HepG2 (cell line): ENCODE measurements at regions of chr5 and their contacts with region 1.

Region 1: DNA sequence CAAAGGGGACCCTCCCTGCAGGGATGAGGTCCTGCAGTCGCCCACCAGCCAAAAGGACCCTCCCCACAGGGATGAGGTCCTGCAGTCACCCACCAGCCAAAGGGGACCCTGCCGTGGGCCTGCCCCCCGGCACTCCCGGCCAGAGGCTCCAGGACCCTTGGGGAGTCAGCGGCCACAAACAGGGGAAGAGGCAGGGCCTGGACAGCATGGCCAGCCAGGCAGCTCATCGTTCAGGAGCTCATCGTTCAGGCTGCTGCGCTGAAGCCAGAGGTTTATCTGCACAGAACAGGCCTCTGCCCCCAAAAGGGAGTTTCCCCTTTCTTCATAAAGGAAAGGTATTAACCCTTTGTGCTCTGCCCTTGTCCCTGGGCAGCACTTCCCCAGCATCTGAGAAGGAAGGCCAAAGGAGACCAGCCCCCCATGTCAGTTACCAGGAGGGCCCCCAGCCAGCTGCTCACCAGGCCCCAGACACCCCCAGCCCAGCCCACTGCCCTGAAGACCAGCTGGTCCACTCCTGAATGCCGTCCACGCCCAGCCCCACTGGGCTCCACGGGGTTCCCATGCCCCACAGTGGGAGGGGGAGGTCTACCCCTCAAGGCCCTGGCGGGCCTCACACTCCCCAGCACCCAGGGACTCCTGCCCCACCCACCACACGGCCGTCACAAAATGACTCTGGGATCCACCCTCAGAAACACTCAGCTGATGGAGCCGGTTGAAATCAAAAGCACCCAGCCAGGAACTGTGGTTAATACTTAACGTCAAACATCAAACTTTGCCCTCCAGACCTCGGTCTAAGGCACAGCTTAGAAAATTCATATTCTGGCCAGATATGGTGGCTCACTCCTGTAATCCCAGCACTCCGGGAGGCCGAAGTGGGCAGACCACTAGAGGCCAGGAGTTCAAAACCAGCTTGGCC is 6.3 kb downstream of the SLC12A7 start:
- DNase-seq: peak; percentile 93
- ATAC-seq: peak; percentile 70
- H3K4me3 ChIP-seq: peak overlapping the region; percentile 55 to 82 (median 60)
- H3K27ac ChIP-seq: peak overlapping the region; percentile 98
- H3K4me1 ChIP-seq: peaks cover 90% of the 10 kb centered on the region
- H3K27me3 ChIP-seq: no peaks in the 10 kb centered on the region; a peak in 1 of 5 replicates
- CTCF ChIP-seq: peak; percentile 13; the same call in 1 of the 2 replicates
- EP300 ChIP-seq: peak in 1 of 2 experiments; percentile 70; a peak in 2 of 4 replicates
- POLR2A ChIP-seq: peak in 1 of 2 experiments; percentile 46; a peak in 2 of 4 replicates
- RAD21 ChIP-seq: no peak

Region 2: GRCh38 chr5:431001-431710 is 674.5 kb before region 1 on chr5:
- CTCF ChIA-PET with region 1: no interaction called
- POLR2A ChIA-PET with region 1: no interaction called
- in situ Hi-C with region 1: no loop called
- intact Hi-C with region 1: no loop called
- DNase-seq: peak; percentile 41
- ATAC-seq: peak; percentile 98
- H3K4me3 ChIP-seq: no peak overlapping the region
- H3K27ac ChIP-seq: no peak overlapping the region
- H3K4me1 ChIP-seq: peaks cover 10% of the 10 kb centered on the region
- H3K27me3 ChIP-seq: no peaks in the 10 kb centered on the region
- CTCF ChIP-seq: peak; percentile 94
- EP300 ChIP-seq: no peak
- POLR2A ChIP-seq: no peak
- RAD21 ChIP-seq: peak; percentile 88

Region 3: DNA sequence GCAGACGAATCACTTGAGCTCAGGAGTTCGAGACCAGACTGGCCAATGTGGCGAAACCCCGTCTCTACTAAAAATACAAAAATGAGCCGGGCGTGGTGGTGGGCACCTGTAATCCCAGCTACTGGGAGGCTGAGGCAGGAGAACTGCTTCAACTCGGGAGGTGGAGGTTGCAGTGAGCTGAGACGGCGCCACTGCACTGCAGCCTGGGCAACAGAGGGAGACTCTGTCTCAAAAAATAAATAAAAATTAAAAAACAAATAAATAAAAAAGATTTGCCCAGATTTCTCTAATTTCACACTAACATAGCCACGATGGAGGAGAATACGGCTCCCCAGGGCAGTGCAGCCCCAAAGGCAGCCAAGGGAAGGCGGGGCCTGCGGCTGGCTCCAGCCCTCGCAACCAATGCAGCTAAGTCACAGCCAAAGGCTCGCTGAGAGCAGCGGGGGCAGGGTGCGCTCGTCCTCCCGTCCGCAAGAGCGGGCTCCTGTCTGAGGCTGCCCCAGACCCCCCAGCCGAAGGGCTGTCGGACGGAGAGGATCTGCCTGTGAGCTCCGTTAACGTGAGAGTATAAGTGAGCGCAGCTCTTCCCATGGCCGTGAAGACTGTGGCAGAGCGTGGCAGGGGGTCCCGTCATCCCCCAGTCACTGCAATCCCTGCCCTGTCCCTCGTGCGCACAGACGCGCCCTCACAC is 37.3 kb before region 1 on chr5:
- CTCF ChIA-PET with region 1: no interaction called
- POLR2A ChIA-PET with region 1: no interaction called
- in situ Hi-C with region 1: loop called (anchors 5 kb)
- intact Hi-C with region 1: no loop called
- DNase-seq: no peak
- ATAC-seq: no peak
- H3K4me3 ChIP-seq: no peak overlapping the region
- H3K27ac ChIP-seq: no peak overlapping the region
- H3K4me1 ChIP-seq: no peaks in the 10 kb centered on the region
- H3K27me3 ChIP-seq: no peaks in the 10 kb centered on the region
- CTCF ChIP-seq: no peak
- EP300 ChIP-seq: no peak
- POLR2A ChIP-seq: no peak
- RAD21 ChIP-seq: no peak

Region 4: GRCh38 chr5:1118231-1118698 is 12.7 kb after region 1 on chr5:
- CTCF ChIA-PET with region 1: no interaction called
- POLR2A ChIA-PET with region 1: interaction called, 91 read pairs
- in situ Hi-C with region 1: no loop called
- intact Hi-C with region 1: no loop called
- DNase-seq: no peak
- ATAC-seq: no peak
- H3K4me3 ChIP-seq: peak overlapping the region in 1 of 3 experiments; percentile 62; a peak in 1 of 6 replicates
- H3K27ac ChIP-seq: no peak overlapping the region
- H3K4me1 ChIP-seq: peaks cover 54% of the 10 kb centered on the region
- H3K27me3 ChIP-seq: peaks cover 28 to 97% of the 10 kb centered on the region in 2 experiments
- CTCF ChIP-seq: no peak
- EP300 ChIP-seq: no peak
- POLR2A ChIP-seq: no peak
- RAD21 ChIP-seq: no peak

Region 5: DNA sequence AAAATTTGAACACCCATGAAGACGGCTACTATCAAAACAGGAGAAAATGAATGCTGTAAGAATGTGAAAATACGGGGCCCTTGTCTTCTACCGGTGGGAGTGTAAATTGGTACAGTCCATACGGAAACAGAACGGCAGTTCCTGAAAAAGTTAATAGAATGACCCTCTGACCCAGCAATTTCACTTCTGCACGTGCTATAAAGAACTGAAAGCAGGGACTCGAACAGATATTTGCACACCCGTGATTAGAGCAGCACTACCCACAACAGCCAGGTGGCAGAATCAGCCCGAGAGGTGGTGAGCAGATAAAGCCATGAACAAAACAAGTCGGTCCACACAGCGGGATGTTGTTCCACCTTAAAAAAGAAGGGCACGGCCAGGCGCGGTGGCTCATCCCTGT is 28.9 kb after region 1 on chr5:
- CTCF ChIA-PET with region 1: interaction called, 6 read pairs
- POLR2A ChIA-PET with region 1: interaction called, 200 read pairs
- in situ Hi-C with region 1: no loop called
- intact Hi-C with region 1: no loop called
- DNase-seq: peak; percentile 30
- ATAC-seq: no peak
- H3K4me3 ChIP-seq: no peak overlapping the region
- H3K27ac ChIP-seq: no peak overlapping the region
- H3K4me1 ChIP-seq: peaks cover 78% of the 10 kb centered on the region
- H3K27me3 ChIP-seq: peaks cover 1 to 47% of the 10 kb centered on the region in 2 experiments; a peak in 3 of 5 replicates
- CTCF ChIP-seq: peak; percentile 47
- EP300 ChIP-seq: no peak
- POLR2A ChIP-seq: no peak
- RAD21 ChIP-seq: no peak

Region 6: GRCh38 chr5:1161833-1162229 is 56.2 kb after region 1 on chr5:
- CTCF ChIA-PET with region 1: no interaction called
- POLR2A ChIA-PET with region 1: interaction called, 53 read pairs
- in situ Hi-C with region 1: no loop called
- intact Hi-C with region 1: loop called (anchors 2 kb)
- DNase-seq: no peak
- ATAC-seq: peak; percentile 34
- H3K4me3 ChIP-seq: peak overlapping the region; percentile 16 to 59 (median 18); a peak in 5 of 6 replicates
- H3K27ac ChIP-seq: peak overlapping the region; percentile 28
- H3K4me1 ChIP-seq: peaks cover 72% of the 10 kb centered on the region
- H3K27me3 ChIP-seq: peaks cover 9 to 53% of the 10 kb centered on the region in 2 experiments; a peak in 4 of 5 replicates
- CTCF ChIP-seq: no peak
- EP300 ChIP-seq: no peak
- POLR2A ChIP-seq: no peak
- RAD21 ChIP-seq: no peak

Region 7: DNA sequence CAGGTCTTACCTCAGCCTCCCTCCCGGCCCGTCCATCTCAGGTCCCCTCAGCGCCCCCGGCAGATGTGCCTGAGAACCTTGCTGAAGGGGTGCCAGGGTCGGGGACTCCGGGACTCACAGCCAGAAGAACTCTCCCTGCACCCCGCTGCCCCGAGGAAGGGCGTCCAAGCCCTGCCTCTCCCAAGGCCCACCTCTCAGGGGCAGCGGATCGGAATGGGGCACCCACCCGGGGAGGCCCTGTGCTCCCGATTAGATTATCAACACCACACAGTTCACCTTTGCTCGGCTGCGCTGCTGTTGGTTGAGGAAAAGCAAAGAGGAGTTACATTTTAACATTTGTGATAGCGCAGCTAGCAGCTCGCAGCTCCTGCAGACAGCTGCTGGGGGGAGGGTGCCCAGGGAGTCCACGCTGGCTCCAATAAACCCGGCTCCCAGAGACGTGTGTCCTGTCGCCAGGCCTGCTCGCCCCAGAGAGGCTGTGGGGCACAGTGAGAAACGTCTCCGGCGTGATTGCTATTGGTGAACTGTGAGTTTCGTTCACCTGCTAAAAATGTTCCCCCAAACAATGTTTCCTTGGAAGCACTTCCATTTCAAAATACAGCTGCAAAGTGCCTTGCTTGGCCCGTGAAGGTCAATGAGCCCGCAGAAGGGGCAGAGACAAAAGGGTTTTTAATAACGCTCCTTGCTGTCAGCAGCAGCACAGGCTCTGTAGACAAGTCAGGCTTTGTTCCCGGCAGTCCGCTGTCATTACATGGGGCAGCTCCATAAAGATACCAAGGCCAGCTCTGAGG is 77.2 kb after region 1 on chr5:
- CTCF ChIA-PET with region 1: no interaction called
- POLR2A ChIA-PET with region 1: interaction called, 19 read pairs
- in situ Hi-C with region 1: no loop called
- intact Hi-C with region 1: no loop called
- DNase-seq: peak; percentile 89
- ATAC-seq: peak; percentile 69
- H3K4me3 ChIP-seq: peak overlapping the region; percentile 68 to 79 (median 74); a peak in 5 of 6 replicates
- H3K27ac ChIP-seq: peak overlapping the region; percentile 99
- H3K4me1 ChIP-seq: peaks cover 94% of the 10 kb centered on the region
- H3K27me3 ChIP-seq: no peaks in the 10 kb centered on the region; a peak in 1 of 5 replicates
- CTCF ChIP-seq: no peak
- EP300 ChIP-seq: peak in 1 of 2 experiments; percentile 54; a peak in 2 of 4 replicates
- POLR2A ChIP-seq: peak in 1 of 2 experiments; percentile 83; a peak in 2 of 4 replicates
- RAD21 ChIP-seq: 0 out of 2 replicates have a peak, but pooled peaks have one; percentile 37